GM10248 (cell line): ENCODE measurements at regions of chr1 and their contacts with region 1.

Region 1: DNA sequence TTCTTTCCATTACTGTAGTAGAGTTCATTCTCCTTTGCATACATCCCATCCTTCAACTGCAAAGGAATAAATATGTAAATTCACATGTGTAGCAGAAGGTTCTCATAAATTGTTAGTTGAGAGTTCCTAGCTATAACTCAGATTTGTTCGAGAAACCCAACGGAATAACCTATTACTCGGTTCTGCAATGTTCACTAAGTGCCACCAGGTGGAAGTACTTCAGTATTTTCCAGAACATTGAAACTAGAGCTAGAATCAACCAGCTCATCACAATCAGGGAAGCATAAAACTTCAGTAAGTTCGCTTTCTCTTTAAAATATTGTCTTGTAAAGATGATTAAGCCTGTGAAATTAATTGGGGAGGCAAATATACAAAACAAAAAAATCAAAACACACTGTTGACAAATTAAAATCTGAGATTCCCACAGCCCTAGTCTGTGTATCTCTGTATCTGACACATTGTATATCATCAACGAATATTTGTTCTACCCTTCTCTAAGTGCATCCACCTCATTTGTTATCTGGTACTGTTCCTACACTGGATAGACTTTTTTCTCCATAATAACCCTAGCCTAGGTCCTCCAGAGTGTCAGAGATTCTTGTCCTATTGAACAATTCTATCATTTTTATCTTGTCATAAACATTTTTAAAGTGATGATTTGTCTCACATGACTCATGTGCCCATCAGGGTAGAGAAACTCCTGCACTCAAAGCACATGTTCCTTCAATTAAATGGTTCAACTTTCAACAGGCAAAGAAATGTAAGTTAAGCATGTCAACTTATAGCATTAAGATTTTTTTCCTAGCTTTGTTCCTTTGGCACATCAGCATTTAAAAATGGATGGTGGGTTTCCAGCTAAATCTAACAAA is 31.9 kb downstream of the MROH9 start:
- DNase-seq: peak; percentile 23
- CTCF ChIP-seq: peak; percentile 38

Region 2: GRCh38 chr1:170978371-170978910 is 11.2 kb after region 1 on chr1:
- CTCF ChIA-PET with region 1: interaction called, 21 read pairs
- POLR2A ChIA-PET with region 1: interaction called, 3 read pairs
- DNase-seq: no peak
- CTCF ChIP-seq: no peak

Region 3: DNA sequence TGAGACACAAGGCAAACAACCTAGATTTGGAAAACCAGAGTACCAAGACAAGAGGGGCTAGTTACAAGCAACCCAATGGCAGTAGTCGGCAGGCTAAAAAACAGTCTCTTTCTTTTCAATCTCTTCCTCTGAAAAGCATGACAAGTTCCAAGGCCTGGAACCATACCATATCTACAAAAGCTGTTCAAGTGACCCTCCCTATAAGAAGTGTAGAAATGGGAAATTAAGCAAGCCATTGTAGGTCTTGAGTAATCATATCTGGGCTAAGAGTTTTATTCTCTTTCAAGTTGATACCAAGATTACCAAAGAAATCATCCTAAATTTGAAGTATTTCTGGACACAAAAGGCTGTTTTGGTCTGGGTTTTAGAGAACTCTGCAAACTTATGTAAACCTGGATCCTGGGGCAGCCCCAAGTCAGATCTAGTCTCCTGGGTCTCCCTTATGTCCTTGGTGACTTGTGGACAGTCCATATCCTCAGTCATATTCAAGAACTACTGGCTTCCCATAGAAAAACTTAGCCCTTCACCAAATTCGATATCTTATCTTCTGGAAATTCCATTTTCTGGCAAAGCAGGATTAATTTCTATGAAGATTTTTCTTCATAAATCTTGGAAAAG is 148.1 kb after region 1 on chr1:
- CTCF ChIA-PET with region 1: no interaction called
- POLR2A ChIA-PET with region 1: no interaction called
- DNase-seq: no peak
- CTCF ChIP-seq: no peak